ENCODE measurements at regions of chr3 and their contacts with region 1.

Region 1: GRCh38 chr3:172710664-172711453 is at the start of gene NCEH1:
- DNase-seq: peak; percentile 98 to 100
- H3K4me3 ChIP-seq: peak within 1 kb of the TSS; percentile 83
- H3K27ac ChIP-seq: peak within 1 kb of the TSS; percentile 98
- H3K4me1 ChIP-seq: peaks cover 62% of the 10 kb centered on the region
- H3K27me3 ChIP-seq: no peaks in the 10 kb centered on the region
- CTCF ChIP-seq: peak; percentile 89
- total RNA-seq, gene NCEH1: 39.6 and 43.5 TPM in 2 replicates

Region 2: DNA sequence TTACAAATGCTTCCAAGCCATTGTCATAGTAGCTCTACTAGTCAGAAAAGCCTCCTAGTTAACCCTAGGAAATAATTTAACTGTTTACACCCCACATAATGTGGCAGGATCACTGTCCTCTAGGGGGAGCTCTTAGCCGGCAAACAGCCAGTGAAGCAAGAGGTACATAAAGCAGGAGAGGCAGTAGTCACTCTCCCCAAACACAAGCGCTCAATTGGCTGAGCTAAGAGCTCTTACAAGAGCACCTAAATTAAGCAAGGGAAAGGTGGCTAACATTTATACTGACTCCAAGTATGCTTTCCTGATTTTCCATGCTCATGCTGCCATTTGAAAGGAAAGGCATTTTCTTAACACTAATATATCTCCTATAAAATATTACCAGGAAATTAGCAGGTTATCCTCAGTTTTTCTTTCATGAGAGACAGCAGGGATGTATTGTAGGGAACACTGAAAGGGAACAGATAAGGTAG is 37.6 kb before region 1 on chr3:
- CTCF ChIA-PET with region 1: interaction called, 6 read pairs
- POLR2A ChIA-PET with region 1: interaction called, 3 read pairs
- intact Hi-C with region 1: loop called (anchors 1 kb)
- DNase-seq: peak; percentile 78 to 82
- H3K4me3 ChIP-seq: no peak overlapping the region
- H3K27ac ChIP-seq: peak overlapping the region; percentile 45
- H3K4me1 ChIP-seq: peaks cover 26% of the 10 kb centered on the region
- H3K27me3 ChIP-seq: no peaks in the 10 kb centered on the region
- CTCF ChIP-seq: peak; percentile 98

Region 3: GRCh38 chr3:172698631-172699030 is 12.2 kb before region 1 on chr3:
- CTCF ChIA-PET with region 1: interaction called, 9 read pairs
- POLR2A ChIA-PET with region 1: interaction called, 3 read pairs
- intact Hi-C with region 1: loop called (anchors 1 kb)
- DNase-seq: no peak
- H3K4me3 ChIP-seq: no peak overlapping the region
- H3K27ac ChIP-seq: peak overlapping the region; percentile 0; the same call in 1 of the 2 replicates
- H3K4me1 ChIP-seq: peaks cover 4% of the 10 kb centered on the region; the same call in 1 of the 2 replicates
- H3K27me3 ChIP-seq: no peaks in the 10 kb centered on the region
- CTCF ChIP-seq: no peak

Region 4: GRCh38 chr3:173135059-173135458 is 424.2 kb after region 1 on chr3:
- CTCF ChIA-PET with region 1: no interaction called
- POLR2A ChIA-PET with region 1: no interaction called
- intact Hi-C with region 1: no loop called
- DNase-seq: no peak
- H3K4me3 ChIP-seq: no peak overlapping the region
- H3K27ac ChIP-seq: no peak overlapping the region
- H3K4me1 ChIP-seq: no peaks in the 10 kb centered on the region
- H3K27me3 ChIP-seq: no peaks in the 10 kb centered on the region
- CTCF ChIP-seq: no peak

Measured in PC-9 (cell line).